BJ (cell line): ENCODE measurements at regions of chr1 and their contacts with region 1.

Region 1: GRCh38 chr1:160428655-160429054 is 28.3 kb downstream of the VANGL2 start:
- DNase-seq: no peak
- H3K4me3 ChIP-seq: no peak overlapping the region
- H3K27me3 ChIP-seq: no peaks in the 10 kb centered on the region; the same call in 1 of the 2 replicates
- CTCF ChIP-seq: peak; percentile 43

Region 2: GRCh38 chr1:160474392-160475242 is 46.0 kb after region 1 on chr1:
- CTCF ChIA-PET with region 1: no interaction called
- POLR2A ChIA-PET with region 1: no interaction called
- DNase-seq: no peak
- H3K4me3 ChIP-seq: no peak overlapping the region
- H3K27me3 ChIP-seq: no peaks in the 10 kb centered on the region
- CTCF ChIP-seq: no peak

Region 3: GRCh38 chr1:160607011-160607671 is 178.5 kb after region 1 on chr1:
- CTCF ChIA-PET with region 1: interaction called, 16 read pairs
- POLR2A ChIA-PET with region 1: no interaction called
- DNase-seq: peak; percentile 4
- H3K4me3 ChIP-seq: no peak overlapping the region
- H3K27me3 ChIP-seq: peaks cover 2% of the 10 kb centered on the region; the same call in 1 of the 2 replicates
- CTCF ChIP-seq: peak; percentile 73